HepG2 (cell line): ENCODE measurements at regions of chr15 and their contacts with region 1.

Region 1: DNA sequence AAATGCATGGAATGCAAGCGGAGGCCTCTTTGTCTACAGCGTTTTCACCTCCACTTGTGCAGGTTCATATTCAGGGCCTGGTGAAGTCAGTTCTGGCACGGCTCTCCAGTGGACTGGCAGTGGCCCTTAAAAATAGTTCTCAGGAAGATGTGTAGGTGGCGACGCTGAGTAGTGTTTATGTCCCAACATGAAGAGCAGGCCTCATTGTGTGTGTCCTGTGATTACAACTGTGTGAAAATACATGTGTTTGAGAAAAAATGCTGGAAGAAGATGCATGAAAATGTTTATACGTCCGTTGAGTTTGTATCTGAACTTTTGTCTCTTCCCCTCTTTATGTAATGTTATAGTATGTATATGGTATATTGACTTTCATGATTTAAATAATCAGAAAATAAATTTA is 7.2 kb downstream of the LIPC start:
- DNase-seq: peak; percentile 77
- ATAC-seq: peak; percentile 89
- H3K4me3 ChIP-seq: no peak overlapping the region
- H3K27ac ChIP-seq: no peak overlapping the region
- H3K4me1 ChIP-seq: peaks cover 75% of the 10 kb centered on the region
- H3K27me3 ChIP-seq: no peaks in the 10 kb centered on the region
- CTCF ChIP-seq: peak; percentile 67
- EP300 ChIP-seq: no peak
- POLR2A ChIP-seq: no peak
- RAD21 ChIP-seq: peak; percentile 68

Region 2: DNA sequence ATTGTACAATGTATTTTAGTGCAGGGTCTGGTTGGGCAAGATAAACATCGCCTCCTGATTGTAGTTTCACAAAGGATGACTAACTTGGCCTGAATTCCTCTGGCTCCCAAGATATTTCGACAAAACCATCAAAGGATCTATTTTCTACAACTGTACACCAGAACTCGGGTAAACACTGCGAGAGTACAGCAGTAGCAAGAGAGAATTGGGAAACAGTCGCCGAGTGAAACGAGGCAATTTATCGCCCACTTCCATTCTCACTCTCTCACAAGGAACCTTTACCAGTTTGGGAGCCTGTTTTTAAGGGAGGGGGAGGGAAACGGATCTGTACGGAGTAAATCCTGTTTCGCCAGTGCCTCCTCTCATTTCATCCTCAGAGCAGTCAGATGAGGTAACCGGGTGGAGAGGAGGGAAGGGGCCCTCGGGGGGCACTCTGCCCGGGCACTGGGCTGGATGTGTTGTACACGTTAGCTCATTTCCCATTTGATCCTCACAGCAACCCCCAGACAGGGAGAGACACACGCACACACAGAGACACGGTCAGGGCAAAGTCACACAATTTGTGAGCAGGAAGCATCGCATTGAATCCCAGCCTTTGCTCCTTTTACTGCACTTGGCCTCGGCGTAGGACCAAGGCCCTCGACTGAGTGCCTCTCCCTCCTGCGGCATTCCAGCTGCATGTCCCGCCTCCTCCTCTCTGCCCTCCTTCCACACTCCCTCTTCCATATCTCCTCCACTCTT is 113.0 kb after region 1 on chr15:
- CTCF ChIA-PET with region 1: no interaction called
- POLR2A ChIA-PET with region 1: no interaction called
- in situ Hi-C with region 1: loop called (anchors 5 kb)
- intact Hi-C with region 1: loop called (anchors 1 kb)
- DNase-seq: peak; percentile 94
- ATAC-seq: peak; percentile 77
- H3K4me3 ChIP-seq: peak overlapping the region; percentile 7 to 59 (median 19)
- H3K27ac ChIP-seq: peak overlapping the region; percentile 74
- H3K4me1 ChIP-seq: peaks cover 41% of the 10 kb centered on the region
- H3K27me3 ChIP-seq: no peaks in the 10 kb centered on the region
- CTCF ChIP-seq: no peak
- EP300 ChIP-seq: peak in 1 of 2 experiments; percentile 64; a peak in 2 of 4 replicates
- POLR2A ChIP-seq: no peak
- RAD21 ChIP-seq: 0 out of 2 replicates have a peak, but pooled peaks have one; percentile 17

Region 3: DNA sequence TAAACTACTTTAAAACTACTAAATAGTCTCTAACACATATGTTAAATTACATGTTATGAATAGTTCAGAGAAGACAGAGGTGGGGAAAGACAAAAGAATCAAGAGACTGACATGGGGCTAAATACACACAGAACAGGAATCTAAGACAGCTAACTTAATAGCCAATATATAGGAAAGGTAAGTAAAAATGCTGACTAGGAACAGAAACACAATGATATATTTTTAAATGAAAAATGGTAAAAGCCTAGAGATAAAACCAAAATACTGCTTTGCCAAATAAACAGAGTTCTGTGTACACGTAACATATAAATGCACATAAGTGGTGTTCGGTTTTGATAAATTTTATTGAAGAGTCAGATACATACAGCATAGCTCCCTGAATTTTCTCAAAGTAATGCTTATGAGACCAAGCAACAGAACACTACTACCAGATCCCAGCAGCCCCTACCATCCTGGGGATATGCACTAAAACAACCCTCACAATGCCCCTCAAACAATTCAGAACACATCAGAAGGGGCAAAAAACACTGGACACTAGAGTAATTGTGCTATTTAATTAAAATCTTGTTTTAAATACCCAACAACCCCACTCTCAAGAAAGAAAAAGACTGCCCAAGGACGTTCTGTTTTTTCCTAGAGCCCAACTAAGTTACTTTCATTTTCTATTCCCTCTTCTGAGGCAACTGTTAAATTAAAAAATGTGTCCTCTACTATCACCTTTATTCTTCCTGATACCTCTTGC is 189.4 kb after region 1 on chr15:
- CTCF ChIA-PET with region 1: no interaction called
- POLR2A ChIA-PET with region 1: no interaction called
- in situ Hi-C with region 1: no loop called
- intact Hi-C with region 1: loop called (anchors 10 kb)
- DNase-seq: no peak
- ATAC-seq: no peak
- H3K4me3 ChIP-seq: no peak overlapping the region
- H3K27ac ChIP-seq: no peak overlapping the region
- H3K4me1 ChIP-seq: peaks cover 20% of the 10 kb centered on the region
- H3K27me3 ChIP-seq: no peaks in the 10 kb centered on the region
- CTCF ChIP-seq: no peak
- EP300 ChIP-seq: no peak
- POLR2A ChIP-seq: no peak
- RAD21 ChIP-seq: no peak